GM12878 (cell line): ENCODE measurements at regions of chr3 and their contacts with region 1.

Region 1: GRCh38 chr3:16048435-16049318 is 125.8 kb upstream of the GALNT15 start:
- DNase-seq: peak; percentile 24
- ATAC-seq: peak; percentile 100
- H3K4me3 ChIP-seq: no peak overlapping the region
- H3K27ac ChIP-seq: no peak overlapping the region
- H3K4me1 ChIP-seq: no peaks in the 10 kb centered on the region
- H3K27me3 ChIP-seq: no peaks in the 10 kb centered on the region
- CTCF ChIP-seq: peak; percentile 68 to 89 (median 73)
- EP300 ChIP-seq: no peak
- POLR2A ChIP-seq: no peak
- RAD21 ChIP-seq: peak; percentile 97

Region 2: GRCh38 chr3:16060358-16060852 is 11.7 kb after region 1 on chr3:
- CTCF ChIA-PET with region 1: interaction called, 32 read pairs
- POLR2A ChIA-PET with region 1: no interaction called
- RAD21 ChIA-PET with region 1: interaction called, 3 read pairs
- SMC1A ChIA-PET with region 1: interaction called, 6 read pairs
- in situ Hi-C with region 1: no loop called
- intact Hi-C with region 1: no loop called
- DNase-seq: no peak
- ATAC-seq: no peak
- H3K4me3 ChIP-seq: no peak overlapping the region
- H3K27ac ChIP-seq: no peak overlapping the region
- H3K4me1 ChIP-seq: no peaks in the 10 kb centered on the region
- H3K27me3 ChIP-seq: no peaks in the 10 kb centered on the region
- CTCF ChIP-seq: no peak
- EP300 ChIP-seq: no peak
- POLR2A ChIP-seq: no peak
- RAD21 ChIP-seq: no peak

Region 3: DNA sequence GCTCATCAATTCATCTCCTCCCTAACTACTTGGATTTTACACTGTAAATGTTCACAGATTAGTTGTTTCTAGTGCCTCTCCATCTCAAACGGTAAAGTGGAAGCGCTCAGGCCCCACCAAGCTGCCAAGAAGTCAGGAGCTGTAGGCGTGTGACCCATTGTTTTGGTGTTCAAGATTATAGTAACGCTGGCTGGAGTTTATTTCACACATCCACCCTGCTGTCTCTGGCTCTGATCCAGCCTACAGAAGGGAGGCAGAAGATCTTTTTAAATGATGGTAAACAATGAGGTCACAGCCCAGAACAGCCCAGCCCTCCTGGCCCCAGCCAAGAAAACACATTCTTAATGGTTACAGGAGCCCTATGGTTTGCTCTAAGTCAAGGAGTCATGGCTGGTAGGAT is 100.1 kb after region 1 on chr3:
- CTCF ChIA-PET with region 1: interaction called, 3 read pairs
- POLR2A ChIA-PET with region 1: no interaction called
- RAD21 ChIA-PET with region 1: interaction called, 5 read pairs
- SMC1A ChIA-PET with region 1: interaction called, 12 read pairs
- in situ Hi-C with region 1: no loop called
- intact Hi-C with region 1: no loop called
- DNase-seq: no peak
- ATAC-seq: no peak
- H3K4me3 ChIP-seq: no peak overlapping the region
- H3K27ac ChIP-seq: no peak overlapping the region
- H3K4me1 ChIP-seq: peaks cover 13% of the 10 kb centered on the region; the same call in 1 of the 2 replicates
- H3K27me3 ChIP-seq: no peaks in the 10 kb centered on the region
- CTCF ChIP-seq: no peak
- EP300 ChIP-seq: no peak
- POLR2A ChIP-seq: no peak
- RAD21 ChIP-seq: no peak

Region 4: DNA sequence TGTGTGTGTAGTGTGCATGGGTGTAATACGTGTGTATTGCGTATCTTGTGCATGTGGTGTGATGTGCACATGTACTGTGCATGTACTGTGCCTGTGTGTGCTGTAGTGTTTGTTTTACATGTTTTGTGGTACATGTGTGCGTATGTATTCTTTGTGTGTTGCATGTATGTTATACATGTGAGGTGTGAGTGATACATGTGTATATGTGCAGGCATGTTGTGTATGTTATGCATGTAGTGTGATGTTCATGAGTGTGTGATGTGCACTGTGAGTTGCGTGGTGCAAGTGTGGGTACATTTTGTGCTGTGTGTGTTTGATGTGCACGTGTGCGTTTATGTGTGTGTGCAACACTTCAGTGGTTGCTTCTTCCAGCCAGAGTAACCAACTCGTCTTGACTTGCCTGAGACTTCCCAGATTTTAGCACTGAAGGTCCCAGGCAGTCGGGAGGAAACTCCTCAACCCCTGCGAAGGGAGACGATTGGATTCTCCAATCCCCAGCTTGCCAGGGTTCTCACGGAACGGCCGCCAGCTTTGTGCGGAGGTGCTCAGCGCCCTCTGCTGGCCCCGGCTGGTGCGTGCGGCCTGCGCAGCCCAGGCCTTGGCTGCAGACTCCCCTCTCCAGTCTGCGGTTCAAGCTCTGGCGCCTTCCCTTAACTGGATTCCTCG is 129.4 kb after region 1 on chr3:
- CTCF ChIA-PET with region 1: interaction called, 127 read pairs
- POLR2A ChIA-PET with region 1: no interaction called
- RAD21 ChIA-PET with region 1: interaction called, 15 read pairs
- SMC1A ChIA-PET with region 1: interaction called, 25 read pairs
- in situ Hi-C with region 1: loop called (anchors 10 kb)
- intact Hi-C with region 1: loop called (anchors 1 kb)
- DNase-seq: no peak
- ATAC-seq: peak; percentile 96
- H3K4me3 ChIP-seq: no peak overlapping the region
- H3K27ac ChIP-seq: no peak overlapping the region
- H3K4me1 ChIP-seq: no peaks in the 10 kb centered on the region
- H3K27me3 ChIP-seq: peaks cover 0 to 3% of the 10 kb centered on the region in 2 experiments; a peak in 2 of 4 replicates
- CTCF ChIP-seq: peak; percentile 89 to 99 (median 98)
- EP300 ChIP-seq: no peak
- POLR2A ChIP-seq: no peak
- RAD21 ChIP-seq: peak; percentile 95

Region 5: GRCh38 chr3:16183601-16184270 is 135.1 kb after region 1 on chr3:
- CTCF ChIA-PET with region 1: interaction called, 127 read pairs
- POLR2A ChIA-PET with region 1: no interaction called
- RAD21 ChIA-PET with region 1: interaction called, 15 read pairs
- SMC1A ChIA-PET with region 1: interaction called, 25 read pairs
- in situ Hi-C with region 1: loop called (anchors 10 kb)
- intact Hi-C with region 1: loop called (anchors 1 kb)
- DNase-seq: no peak
- ATAC-seq: no peak
- H3K4me3 ChIP-seq: no peak overlapping the region
- H3K27ac ChIP-seq: no peak overlapping the region
- H3K4me1 ChIP-seq: no peaks in the 10 kb centered on the region
- H3K27me3 ChIP-seq: no peaks in the 10 kb centered on the region; a peak in 1 of 4 replicates
- CTCF ChIP-seq: no peak
- EP300 ChIP-seq: no peak
- POLR2A ChIP-seq: no peak
- RAD21 ChIP-seq: no peak

Region 6: GRCh38 chr3:16247276-16248061 is 198.8 kb after region 1 on chr3:
- CTCF ChIA-PET with region 1: interaction called, 18 read pairs
- POLR2A ChIA-PET with region 1: no interaction called
- RAD21 ChIA-PET with region 1: interaction called, 7 read pairs
- SMC1A ChIA-PET with region 1: interaction called, 38 read pairs
- in situ Hi-C with region 1: loop called (anchors 5 kb)
- intact Hi-C with region 1: loop called (anchors 1 kb)
- DNase-seq: peak; percentile 43
- ATAC-seq: peak; percentile 94
- H3K4me3 ChIP-seq: no peak overlapping the region
- H3K27ac ChIP-seq: no peak overlapping the region
- H3K4me1 ChIP-seq: peaks cover 7% of the 10 kb centered on the region
- H3K27me3 ChIP-seq: no peaks in the 10 kb centered on the region
- CTCF ChIP-seq: peak; percentile 84 to 97 (median 90)
- EP300 ChIP-seq: peak; percentile 29 to 50; a peak in 1 of 4 replicates
- POLR2A ChIP-seq: no peak
- RAD21 ChIP-seq: peak; percentile 94